Activated T-helper 1 cell treated with anti-CD3 and anti-CD28 coated beads, Interleukin-12 subunit alpha, Interleukin-12 subunit beta, Interleukin-2, Interleukin-4 antibody, amounts not matched to agents 30 ng/mL and 10 ng/mL and 1 ng/mL, durations not matched to agents 14 hours and 24 hours and 36 hours (primary cell): ENCODE measurements at regions of chr20 and their contacts with region 1.

Region 1: GRCh38 chr20:62623488-62624324 is 18.6 kb upstream of the SLCO4A1 start:
- DNase-seq: peak; percentile 81
- H3K4me3 Mint-ChIP-seq: peak overlapping the region; percentile 80
- H3K27ac Mint-ChIP-seq: peak overlapping the region; percentile 96
- H3K4me1 Mint-ChIP-seq: peaks cover 25% of the 10 kb centered on the region
- H3K27me3 Mint-ChIP-seq: no peaks in the 10 kb centered on the region

Region 2: DNA sequence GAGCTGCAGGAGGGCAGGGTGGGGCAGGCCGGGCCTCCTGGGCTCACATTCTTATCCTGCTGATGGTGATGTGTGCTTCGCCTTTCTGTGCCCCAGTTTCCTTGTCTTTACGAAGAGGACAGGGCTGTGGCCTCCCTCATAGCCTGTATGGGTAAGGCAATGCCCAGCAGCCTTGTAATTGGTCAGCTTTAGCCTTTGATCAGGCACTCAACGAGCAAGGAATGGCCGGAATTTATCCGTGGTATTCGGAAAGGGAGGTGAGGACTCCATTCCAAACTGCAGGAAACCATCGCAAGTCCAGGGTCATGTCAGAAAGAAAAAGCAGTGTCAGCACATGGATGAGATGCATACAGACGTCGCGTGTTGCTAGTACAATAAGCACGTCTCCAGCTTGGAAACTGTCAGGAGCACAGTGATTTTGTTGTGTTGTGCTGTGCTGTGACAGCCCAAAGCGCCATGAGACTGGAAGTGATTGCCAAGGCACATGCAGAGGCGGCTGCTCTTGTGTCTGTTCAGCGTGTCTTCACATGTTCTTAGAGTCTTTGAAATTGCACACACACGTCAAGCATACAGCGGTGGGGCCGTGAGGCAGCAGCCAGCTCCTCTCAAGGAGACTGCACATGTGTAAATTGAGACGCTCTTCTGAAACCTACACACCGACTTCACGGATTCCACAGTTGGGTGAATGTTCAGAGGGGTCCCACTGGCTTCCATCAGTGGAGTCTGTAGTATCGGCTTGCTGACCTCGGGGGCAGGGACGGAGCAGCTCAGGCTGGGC is 474.0 kb before region 1 on chr20:
- intact Hi-C with region 1: loop called (anchors 5 kb)
- DNase-seq: no peak
- H3K4me3 Mint-ChIP-seq: no peak overlapping the region
- H3K27ac Mint-ChIP-seq: no peak overlapping the region
- H3K4me1 Mint-ChIP-seq: peaks cover 17% of the 10 kb centered on the region
- H3K27me3 Mint-ChIP-seq: no peaks in the 10 kb centered on the region

Region 3: DNA sequence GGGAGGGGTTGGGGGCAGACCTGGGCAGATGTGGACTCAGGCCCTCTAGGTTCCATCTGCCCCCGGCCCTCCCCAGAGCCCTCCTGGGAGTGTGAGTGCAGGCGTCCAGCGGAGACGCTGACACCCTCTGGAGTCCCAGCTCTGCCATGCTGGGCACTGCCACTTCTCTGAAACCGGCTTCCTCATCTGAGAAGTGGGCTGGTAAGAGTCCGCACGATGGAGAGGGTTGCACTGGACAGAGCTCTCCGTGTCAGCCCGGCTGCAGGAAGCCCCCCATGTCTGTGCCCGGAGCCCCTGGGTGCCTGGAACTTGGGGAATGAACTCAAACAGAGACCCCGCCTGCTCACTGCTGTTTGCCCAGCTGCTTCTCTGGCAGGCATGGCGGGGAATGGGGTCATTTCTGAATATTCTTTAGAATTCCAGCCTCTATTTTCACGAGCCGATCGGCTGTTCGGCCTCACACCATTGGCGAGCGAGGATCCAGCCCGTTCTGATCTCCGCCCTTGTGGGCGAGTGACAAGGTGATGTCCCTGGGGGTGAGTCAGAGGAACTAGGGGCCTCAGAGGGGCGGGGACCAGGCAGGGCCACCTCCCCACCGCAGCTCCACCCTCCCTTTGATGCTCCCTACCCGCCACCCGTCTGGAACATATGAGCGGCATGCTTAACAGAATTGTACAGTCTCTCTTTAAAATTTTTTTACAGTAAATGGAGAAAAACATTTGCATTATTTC is 100.1 kb before region 1 on chr20:
- intact Hi-C with region 1: loop called (anchors 1 kb)
- DNase-seq: peak; percentile 44
- H3K4me3 Mint-ChIP-seq: peak overlapping the region; percentile 40
- H3K27ac Mint-ChIP-seq: peak overlapping the region; percentile 44
- H3K4me1 Mint-ChIP-seq: peaks cover 13% of the 10 kb centered on the region
- H3K27me3 Mint-ChIP-seq: peaks cover 7% of the 10 kb centered on the region

Region 4: DNA sequence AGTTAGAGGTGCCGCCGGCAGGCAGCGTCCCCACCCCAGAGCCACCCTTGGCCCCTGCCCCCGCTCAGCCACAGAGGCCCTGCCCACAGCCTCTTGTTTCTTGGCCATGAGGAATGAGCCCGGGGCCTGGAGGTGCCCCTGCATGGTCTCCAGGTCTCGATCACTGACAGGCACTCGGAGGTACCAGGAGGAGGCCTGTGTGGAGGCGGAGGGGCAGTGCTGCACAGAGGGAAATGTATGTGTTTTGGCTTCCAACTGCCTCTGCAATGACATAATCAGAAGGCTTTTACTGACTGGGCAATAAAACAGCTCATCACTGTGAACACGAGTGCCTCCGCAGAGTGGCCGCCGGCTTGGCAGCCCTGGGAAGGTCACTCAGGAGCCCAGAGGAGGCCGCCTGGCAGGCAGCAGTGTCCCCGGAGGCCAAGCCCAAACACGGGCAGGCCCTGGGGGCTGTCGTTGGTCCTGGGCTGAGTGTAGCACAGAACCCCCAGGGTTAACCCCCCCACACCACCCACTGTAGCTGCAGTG is 86.8 kb before region 1 on chr20:
- intact Hi-C with region 1: no loop called
- DNase-seq: no peak
- H3K4me3 Mint-ChIP-seq: no peak overlapping the region
- H3K27ac Mint-ChIP-seq: no peak overlapping the region
- H3K4me1 Mint-ChIP-seq: no peaks in the 10 kb centered on the region
- H3K27me3 Mint-ChIP-seq: no peaks in the 10 kb centered on the region

Region 5: DNA sequence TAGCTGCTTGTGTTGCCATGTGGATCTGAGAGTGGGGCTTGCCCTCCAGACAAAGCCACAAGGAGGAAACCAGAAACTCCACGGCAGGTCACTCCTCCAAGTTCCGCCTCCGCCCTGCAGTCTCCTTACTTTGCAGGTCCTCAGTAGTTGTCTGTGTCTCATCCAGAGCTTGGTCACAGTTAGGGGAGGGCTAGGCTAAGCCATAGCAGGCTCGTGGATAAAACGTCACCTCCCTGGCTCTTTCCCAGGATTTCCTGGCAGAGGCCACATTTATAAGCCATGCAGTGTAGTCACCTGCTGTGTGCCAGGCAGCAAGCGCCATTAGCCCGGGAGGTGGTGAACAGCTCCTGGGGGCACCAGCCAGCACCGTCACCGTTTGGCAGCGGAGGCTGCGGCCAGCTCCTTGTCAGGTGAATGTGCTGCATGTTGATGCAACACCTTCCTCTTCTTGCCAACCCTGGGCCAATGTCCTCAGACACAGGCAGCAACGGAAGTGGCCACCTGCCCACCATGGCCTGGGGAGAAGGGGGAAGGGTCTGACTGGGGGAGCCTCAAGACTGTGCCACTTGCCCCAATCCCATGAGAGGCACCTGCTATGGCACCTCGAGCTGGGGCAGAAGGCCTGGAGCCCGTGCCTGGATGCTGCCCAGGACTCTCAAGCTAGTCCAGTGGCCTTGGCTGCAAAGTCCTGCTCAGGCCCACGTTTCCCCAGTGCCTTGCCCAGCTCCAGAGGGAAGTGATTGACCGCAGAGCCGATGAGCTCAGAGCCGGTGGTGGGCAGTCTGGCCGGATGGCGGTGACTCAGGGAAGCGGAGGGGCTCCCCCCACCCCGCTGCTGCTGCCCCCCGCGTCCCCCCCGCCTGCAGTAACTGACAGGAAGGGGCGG is 20.4 kb before region 1 on chr20:
- intact Hi-C with region 1: loop called (anchors 1 kb)
- DNase-seq: peak; percentile 25
- H3K4me3 Mint-ChIP-seq: peak overlapping the region; percentile 78
- H3K27ac Mint-ChIP-seq: peak overlapping the region; percentile 79
- H3K4me1 Mint-ChIP-seq: peaks cover 48% of the 10 kb centered on the region
- H3K27me3 Mint-ChIP-seq: peaks cover 21% of the 10 kb centered on the region

Region 6: GRCh38 chr20:62642040-62642665 is 18.4 kb after region 1 on chr20 and contains the start of gene SLCO4A1:
- intact Hi-C with region 1: loop called (anchors 1 kb)
- DNase-seq: peak; percentile 90
- H3K4me3 Mint-ChIP-seq: peak within 1 kb of the TSS; percentile 85
- H3K27ac Mint-ChIP-seq: peak within 1 kb of the TSS; percentile 78
- H3K4me1 Mint-ChIP-seq: peaks cover 16% of the 10 kb centered on the region
- H3K27me3 Mint-ChIP-seq: peaks cover 16% of the 10 kb centered on the region
- total RNA-seq, gene SLCO4A1: 47.6 and 49.8 TPM in 2 replicates